ENCODE measurements at regions of chr9 and their contacts with region 1.

Region 1: DNA sequence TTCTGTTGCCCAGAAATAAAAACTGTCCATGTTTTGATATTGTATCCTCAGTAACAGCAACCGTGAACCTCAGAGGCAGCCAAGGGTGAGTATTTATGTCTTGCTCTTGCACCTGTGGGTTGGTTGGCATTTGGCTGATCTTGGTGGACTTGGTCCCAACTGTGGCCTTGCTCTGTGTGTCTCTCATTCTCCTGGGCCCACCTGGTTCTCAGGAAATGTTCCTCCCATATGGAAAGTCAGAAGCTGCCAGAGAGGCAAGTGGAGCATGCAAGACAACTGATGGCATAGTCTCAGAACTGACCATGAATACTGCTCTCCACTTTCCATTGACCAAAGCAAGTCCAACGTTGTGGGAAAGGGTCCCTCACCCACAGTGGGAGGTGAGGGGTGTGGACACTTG is 13.6 kb upstream of the NINJ1 start:
- DNase-seq: no peak

Region 2: DNA sequence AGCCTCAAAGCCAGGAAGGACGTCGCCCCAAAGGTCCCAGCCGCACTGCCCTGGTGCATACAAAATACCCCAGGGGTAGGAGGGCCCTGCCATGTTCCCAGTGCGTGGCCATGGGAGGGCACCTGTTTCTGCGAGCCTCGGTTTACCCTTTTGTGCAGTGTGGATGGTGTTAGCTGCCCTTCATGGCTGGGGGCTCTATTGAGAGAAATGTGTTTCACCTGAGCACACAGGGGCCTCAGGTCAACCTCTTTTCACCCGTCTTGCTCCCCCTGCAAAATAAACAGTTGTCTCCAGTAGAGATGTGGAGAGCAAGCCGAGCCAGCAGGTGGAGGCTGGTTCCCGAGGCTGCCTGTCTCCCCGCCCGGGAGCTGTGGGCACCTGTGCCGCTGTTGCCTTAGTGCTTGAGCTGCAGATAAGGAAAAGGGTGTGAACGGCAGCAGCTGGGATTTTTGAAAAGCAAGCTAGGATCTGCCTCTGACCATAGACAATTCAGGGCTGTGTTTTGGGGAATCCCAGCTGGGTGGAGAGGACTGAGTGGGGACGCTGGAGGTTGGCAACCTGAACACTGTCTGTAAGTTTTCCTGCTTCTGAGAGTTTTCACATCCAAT is 45.6 kb after region 1 on chr9:
- intact Hi-C with region 1: loop called in 1 of 2 experiments (anchors 1 kb)
- DNase-seq: no peak

Measured in posterior vena cava (tissue), 2 donors.